Common myeloid progenitor, CD34-positive (primary cell): ENCODE measurements at regions of chr2 and their contacts with region 1.

Region 1: GRCh38 chr2:75646583-75647425 is at the start of gene MRPL19:
- DNase-seq: peak; percentile 83 to 90 (median 87)
- H3K4me3 ChIP-seq: peak within 1 kb of the TSS; percentile 88 to 97 (median 91)
- H3K27ac ChIP-seq: peak within 1 kb of the TSS; percentile 62 to 88
- H3K4me1 ChIP-seq: peaks cover 0 to 14% (median 8%) of the 10 kb centered on the region in 4 experiments
- H3K27me3 ChIP-seq: no peaks in the 10 kb centered on the region

Region 2: DNA sequence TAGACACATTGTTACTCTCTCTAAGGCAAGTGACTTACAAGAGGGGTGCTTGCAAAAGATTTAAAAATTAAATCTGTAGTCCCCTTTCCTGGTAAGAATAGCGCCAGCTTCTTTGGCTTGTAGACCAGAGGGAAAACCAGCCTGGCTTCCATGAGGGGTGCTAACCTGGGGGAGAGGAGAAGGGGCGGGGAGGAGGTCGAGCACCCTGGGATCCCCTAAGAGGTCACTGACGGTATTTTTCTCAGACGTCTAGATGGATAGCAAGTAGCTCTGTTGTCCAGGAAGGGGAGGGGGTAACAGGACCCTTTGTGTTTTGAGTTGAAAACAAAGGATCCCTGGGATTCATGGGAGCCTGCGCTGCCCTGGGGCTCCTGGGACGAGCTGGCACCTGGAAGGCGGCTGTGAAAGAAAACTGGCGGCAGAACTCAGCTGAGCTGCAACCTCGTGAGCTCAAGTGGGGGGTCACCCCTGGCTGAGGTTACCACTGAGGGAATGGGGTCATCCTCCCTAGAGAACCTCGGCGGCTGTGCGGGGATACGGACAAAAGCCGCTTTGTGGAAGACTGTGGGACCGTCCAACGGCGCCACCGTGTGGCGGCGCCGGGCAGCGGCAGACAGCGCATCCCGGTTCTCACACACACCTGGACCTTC is 38.0 kb before region 1 on chr2:
- CTCF ChIA-PET with region 1: no interaction called
- POLR2A ChIA-PET with region 1: no interaction called
- DNase-seq: peak; percentile 25 to 56 (median 44)
- H3K4me3 ChIP-seq: peak overlapping the region in 1 of 7 experiments; percentile 42
- H3K27ac ChIP-seq: no peak overlapping the region
- H3K4me1 ChIP-seq: peaks cover 0 to 3% (median 2%) of the 10 kb centered on the region in 4 experiments
- H3K27me3 ChIP-seq: peaks cover 0 to 61% (median 33%) of the 10 kb centered on the region in 5 experiments

Region 3: GRCh38 chr2:75634945-75635344 is 11.9 kb before region 1 on chr2:
- CTCF ChIA-PET with region 1: interaction called, 14 read pairs
- POLR2A ChIA-PET with region 1: no interaction called
- DNase-seq: no peak
- H3K4me3 ChIP-seq: no peak overlapping the region
- H3K27ac ChIP-seq: no peak overlapping the region
- H3K4me1 ChIP-seq: no peaks in the 10 kb centered on the region
- H3K27me3 ChIP-seq: peaks cover 0 to 13% (median 2%) of the 10 kb centered on the region in 5 experiments

Region 4: GRCh38 chr2:75667884-75668283 is 21.1 kb after region 1 on chr2:
- CTCF ChIA-PET with region 1: interaction called, 12 read pairs
- POLR2A ChIA-PET with region 1: no interaction called
- DNase-seq: no peak
- H3K4me3 ChIP-seq: no peak overlapping the region
- H3K27ac ChIP-seq: no peak overlapping the region
- H3K4me1 ChIP-seq: no peaks in the 10 kb centered on the region
- H3K27me3 ChIP-seq: no peaks in the 10 kb centered on the region